Vagina (tissue), 2 donors: ENCODE measurements at regions of chr9 and their contacts with region 1.

Region 1: DNA sequence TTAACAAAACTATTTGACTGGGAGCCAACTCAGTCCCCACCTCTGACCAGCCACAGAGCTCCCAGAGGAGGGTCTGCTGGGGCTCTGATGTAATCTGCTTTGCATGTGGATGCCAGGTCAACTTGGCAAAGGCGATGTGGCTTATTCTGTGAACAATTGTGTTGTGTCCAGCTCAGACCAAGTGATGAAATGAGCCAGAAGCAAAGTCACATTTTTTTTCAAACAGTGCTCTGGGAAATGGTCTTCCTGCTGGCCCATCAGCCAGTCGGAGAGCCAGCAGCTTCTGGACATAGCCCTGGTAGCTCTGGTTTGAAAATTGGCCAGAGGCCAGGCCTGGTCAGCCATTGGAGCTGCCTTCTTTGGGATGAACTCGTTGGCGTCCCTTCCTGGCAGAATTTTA is 86.5 kb downstream of the ANGPTL2 start:
- DNase-seq: no peak
- H3K4me3 ChIP-seq: no peak overlapping the region
- H3K27ac ChIP-seq: peak overlapping the region; percentile 77
- H3K4me1 ChIP-seq: peaks cover 25% of the 10 kb centered on the region
- H3K27me3 ChIP-seq: no peaks in the 10 kb centered on the region
- CTCF ChIP-seq: no peak
- POLR2A ChIP-seq: no peak

Region 2: GRCh38 chr9:126791406-126792151 is 244.4 kb before region 1 on chr9:
- intact Hi-C with region 1: no loop called
- DNase-seq: no peak
- H3K4me3 ChIP-seq: no peak overlapping the region
- H3K27ac ChIP-seq: no peak overlapping the region
- H3K4me1 ChIP-seq: no peaks in the 10 kb centered on the region
- H3K27me3 ChIP-seq: no peaks in the 10 kb centered on the region
- CTCF ChIP-seq: no peak
- POLR2A ChIP-seq: no peak

Region 3: DNA sequence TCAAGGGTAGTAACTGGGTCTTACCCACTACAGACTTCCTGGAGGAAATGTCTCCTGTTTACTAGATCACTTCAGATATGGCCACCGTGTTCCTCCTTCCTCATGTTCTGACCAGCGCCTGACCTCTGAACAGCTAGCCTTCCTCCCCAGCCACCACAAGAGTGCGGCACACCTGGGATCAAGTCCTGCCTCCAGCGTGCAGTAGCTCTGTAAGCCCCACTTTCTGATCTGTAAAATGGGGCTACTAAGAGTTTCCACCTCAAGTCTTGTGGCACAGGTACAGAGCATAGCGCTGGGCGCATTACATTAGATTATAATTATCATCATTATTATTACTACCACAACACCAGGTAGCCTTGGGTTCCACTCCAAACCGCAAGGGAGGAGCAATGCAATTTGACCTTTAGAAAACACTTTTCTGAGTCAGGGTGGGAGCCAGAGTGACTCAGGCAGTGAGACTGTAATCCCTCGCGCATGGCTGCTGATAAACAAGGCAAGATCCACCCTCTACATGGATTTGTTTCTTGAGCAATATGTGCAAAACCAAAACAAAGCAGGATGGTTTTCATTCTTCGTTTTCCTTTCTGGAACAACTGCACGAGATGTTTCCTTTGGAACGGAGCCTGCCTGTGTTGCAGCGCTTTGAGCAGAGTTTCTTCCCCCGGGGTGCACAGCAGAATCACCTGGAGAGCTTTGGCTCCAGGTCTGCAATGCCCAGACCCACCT is 151.4 kb after region 1 on chr9:
- intact Hi-C with region 1: loop called (anchors 5 kb)
- DNase-seq: no peak
- H3K4me3 ChIP-seq: no peak overlapping the region
- H3K27ac ChIP-seq: peak overlapping the region; percentile 90
- H3K4me1 ChIP-seq: peaks cover 50% of the 10 kb centered on the region
- H3K27me3 ChIP-seq: no peaks in the 10 kb centered on the region
- CTCF ChIP-seq: peak in 1 of 3 experiments; percentile 6
- POLR2A ChIP-seq: no peak